IMR-90 (cell line): ENCODE measurements at regions of chr1 and their contacts with region 1.

Region 1: GRCh38 chr1:170929835-170930554 is 5.3 kb upstream of the MROH9 start:
- DNase-seq: peak; percentile 66
- ATAC-seq: peak; percentile 98
- H3K4me3 ChIP-seq: no peak overlapping the region
- H3K27ac ChIP-seq: no peak overlapping the region
- H3K4me1 ChIP-seq: no peaks in the 10 kb centered on the region
- H3K27me3 ChIP-seq: no peaks in the 10 kb centered on the region; the same call in 1 of the 2 replicates
- CTCF ChIP-seq: peak; percentile 76
- POLR2A ChIP-seq: no peak
- RAD21 ChIP-seq: peak; percentile 79

Region 2: DNA sequence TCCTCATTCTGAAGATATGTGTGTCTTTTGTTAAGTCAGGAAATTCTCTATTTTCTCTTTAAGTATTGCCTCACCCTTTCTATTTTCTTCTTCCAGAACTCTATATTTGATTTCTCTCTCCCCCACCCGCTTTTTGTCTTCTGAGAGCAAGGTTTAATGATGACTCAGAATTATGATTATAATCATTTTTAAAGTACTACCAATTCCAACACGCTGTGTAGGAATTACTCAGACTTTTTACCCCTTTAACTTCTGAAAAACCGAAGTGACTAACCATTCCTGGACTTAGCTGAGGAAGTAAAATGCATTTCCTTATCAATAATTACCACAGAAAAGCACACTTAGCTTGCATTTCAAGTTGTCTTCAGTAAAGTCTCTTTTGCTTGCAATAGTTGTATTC is 1015.5 kb before region 1 on chr1:
- CTCF ChIA-PET with region 1: interaction called, 3 read pairs
- POLR2A ChIA-PET with region 1: no interaction called
- dilution Hi-C with region 1: no loop called
- in situ Hi-C with region 1: loop called (anchors 10 kb)
- intact Hi-C with region 1: no loop called
- DNase-seq: peak; percentile 65
- ATAC-seq: peak; percentile 24; the same call in 1 of the 2 replicates
- H3K4me3 ChIP-seq: no peak overlapping the region
- H3K27ac ChIP-seq: no peak overlapping the region
- H3K4me1 ChIP-seq: peaks cover 3% of the 10 kb centered on the region; the same call in 1 of the 2 replicates
- H3K27me3 ChIP-seq: no peaks in the 10 kb centered on the region
- CTCF ChIP-seq: no peak
- POLR2A ChIP-seq: no peak
- RAD21 ChIP-seq: no peak

Region 3: GRCh38 chr1:170765712-170766330 is 164.2 kb before region 1 on chr1:
- CTCF ChIA-PET with region 1: no interaction called
- POLR2A ChIA-PET with region 1: no interaction called
- dilution Hi-C with region 1: no loop called
- in situ Hi-C with region 1: no loop called
- intact Hi-C with region 1: loop called (anchors 1 kb)
- DNase-seq: peak; percentile 64
- ATAC-seq: peak; percentile 87
- H3K4me3 ChIP-seq: no peak overlapping the region
- H3K27ac ChIP-seq: no peak overlapping the region
- H3K4me1 ChIP-seq: no peaks in the 10 kb centered on the region
- H3K27me3 ChIP-seq: no peaks in the 10 kb centered on the region
- CTCF ChIP-seq: peak; percentile 75
- POLR2A ChIP-seq: no peak
- RAD21 ChIP-seq: peak; percentile 84

Region 4: GRCh38 chr1:170993151-170993550 is 63.2 kb after region 1 on chr1:
- CTCF ChIA-PET with region 1: no interaction called
- POLR2A ChIA-PET with region 1: no interaction called
- dilution Hi-C with region 1: no loop called
- in situ Hi-C with region 1: no loop called
- intact Hi-C with region 1: no loop called
- DNase-seq: no peak
- ATAC-seq: no peak
- H3K4me3 ChIP-seq: no peak overlapping the region
- H3K27ac ChIP-seq: no peak overlapping the region
- H3K4me1 ChIP-seq: no peaks in the 10 kb centered on the region
- H3K27me3 ChIP-seq: no peaks in the 10 kb centered on the region
- CTCF ChIP-seq: no peak
- POLR2A ChIP-seq: no peak
- RAD21 ChIP-seq: no peak